Testis (tissue), 5 donors: ENCODE measurements at regions of chr5 and their contacts with region 1.

Region 1: DNA sequence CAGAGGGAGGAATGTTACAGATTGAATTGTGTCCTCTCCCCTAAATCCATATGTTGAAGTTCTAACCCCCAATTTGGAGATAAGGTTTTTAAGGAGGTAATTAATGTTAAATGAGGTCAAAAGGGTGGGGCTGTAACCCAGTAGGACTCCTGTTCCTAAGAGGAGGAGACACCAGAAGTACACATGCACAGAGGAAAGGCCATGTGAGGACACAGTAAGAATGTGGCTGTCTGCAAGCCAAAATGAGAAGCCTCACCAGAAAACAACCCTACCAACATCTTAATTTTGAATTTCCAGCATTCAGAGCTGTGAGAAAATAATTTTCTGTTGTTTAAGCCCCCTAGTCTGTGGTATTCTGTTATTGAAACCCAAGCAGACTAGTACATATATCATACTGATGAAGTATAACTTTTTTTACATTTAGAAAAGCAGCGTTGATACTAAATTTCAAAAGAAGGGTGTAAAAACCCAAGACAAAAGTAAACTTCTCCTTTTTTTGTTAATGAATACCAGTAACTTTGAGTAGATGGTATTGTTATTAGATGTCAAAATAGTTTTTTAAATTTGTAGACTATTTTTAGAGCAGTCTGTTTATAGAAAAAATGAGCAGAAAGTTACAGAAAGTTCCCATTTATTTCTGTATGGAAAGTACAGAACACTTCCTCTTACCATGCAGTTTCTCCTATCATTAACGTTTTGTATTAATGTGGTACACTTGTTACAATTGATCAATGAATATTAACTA is 25.1 kb downstream of the RNF180 start:
- DNase-seq: peak; percentile 17
- H3K4me3 ChIP-seq: no peak overlapping the region
- H3K27ac ChIP-seq: no peak overlapping the region
- H3K4me1 ChIP-seq: no peaks in the 10 kb centered on the region
- H3K27me3 ChIP-seq: no peaks in the 10 kb centered on the region
- CTCF ChIP-seq: no peak
- POLR2A ChIP-seq: no peak

Region 2: DNA sequence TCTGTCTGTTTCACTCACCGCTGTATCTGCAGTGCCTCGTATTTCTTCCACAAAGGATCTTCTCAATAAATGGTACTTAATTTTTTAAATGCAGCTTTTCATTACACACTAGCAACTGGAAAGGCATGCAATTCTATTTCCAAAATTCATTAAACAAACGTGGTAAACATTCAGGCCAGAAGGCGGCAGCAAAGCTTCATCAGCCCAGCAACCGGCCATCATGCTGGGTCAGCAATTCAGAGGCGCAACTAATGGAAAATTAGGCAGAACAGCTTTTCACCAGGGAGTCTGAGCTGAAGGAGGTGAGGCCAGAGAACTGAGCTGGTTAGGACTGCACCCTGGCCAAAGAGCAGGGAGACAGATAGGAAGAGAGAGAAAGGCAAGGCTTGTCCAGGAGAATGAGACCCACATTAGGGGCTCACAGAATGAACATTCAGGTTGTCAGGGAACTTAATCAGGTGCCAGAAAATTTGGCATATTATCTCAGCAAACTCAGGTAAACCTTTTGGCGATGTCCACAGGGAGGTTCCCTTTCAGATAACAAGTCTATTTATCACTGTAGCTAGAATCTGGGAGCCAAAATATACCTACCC is 42.8 kb before region 1 on chr5:
- intact Hi-C with region 1: loop called (anchors 10 kb)
- DNase-seq: peak; percentile 82
- H3K4me3 ChIP-seq: no peak overlapping the region
- H3K27ac ChIP-seq: no peak overlapping the region
- H3K4me1 ChIP-seq: no peaks in the 10 kb centered on the region
- H3K27me3 ChIP-seq: no peaks in the 10 kb centered on the region
- CTCF ChIP-seq: peak; percentile 71 to 79 (median 76)
- POLR2A ChIP-seq: no peak

Region 3: GRCh38 chr5:64318175-64318574 is 127.4 kb after region 1 on chr5:
- intact Hi-C with region 1: no loop called
- DNase-seq: no peak
- H3K4me3 ChIP-seq: no peak overlapping the region
- H3K27ac ChIP-seq: no peak overlapping the region
- H3K4me1 ChIP-seq: no peaks in the 10 kb centered on the region
- H3K27me3 ChIP-seq: no peaks in the 10 kb centered on the region
- CTCF ChIP-seq: no peak
- POLR2A ChIP-seq: no peak